ENCODE measurements at regions of chr16 and their contacts with region 1.

Region 1: GRCh38 chr16:47141773-47142485 is 1.8 kb downstream of the NETO2 start:
- DNase-seq: peak; percentile 86
- ATAC-seq: peak; percentile 89
- H3K4me3 ChIP-seq: peak overlapping the region; percentile 56
- H3K27ac ChIP-seq: no peak overlapping the region
- H3K4me1 ChIP-seq: peaks cover 9% of the 10 kb centered on the region
- H3K27me3 ChIP-seq: peaks cover 7% of the 10 kb centered on the region
- CTCF ChIP-seq: peak; percentile 95

Region 2: GRCh38 chr16:47431960-47432359 is 290.0 kb after region 1 on chr16:
- intact Hi-C with region 1: no loop called
- DNase-seq: no peak
- ATAC-seq: no peak
- H3K4me3 ChIP-seq: no peak overlapping the region
- H3K27ac ChIP-seq: no peak overlapping the region
- H3K4me1 ChIP-seq: no peaks in the 10 kb centered on the region
- H3K27me3 ChIP-seq: no peaks in the 10 kb centered on the region
- CTCF ChIP-seq: no peak

Region 3: GRCh38 chr16:48164907-48165726 is 1023.2 kb after region 1 on chr16:
- intact Hi-C with region 1: loop called (anchors 10 kb)
- DNase-seq: peak; percentile 86
- ATAC-seq: peak; percentile 97
- H3K4me3 ChIP-seq: no peak overlapping the region
- H3K27ac ChIP-seq: peak overlapping the region; percentile 39
- H3K4me1 ChIP-seq: peaks cover 12% of the 10 kb centered on the region
- H3K27me3 ChIP-seq: no peaks in the 10 kb centered on the region
- CTCF ChIP-seq: peak; percentile 89